HCT116 (cell line): ENCODE measurements at regions of chr9 and their contacts with region 1.

Region 1: DNA sequence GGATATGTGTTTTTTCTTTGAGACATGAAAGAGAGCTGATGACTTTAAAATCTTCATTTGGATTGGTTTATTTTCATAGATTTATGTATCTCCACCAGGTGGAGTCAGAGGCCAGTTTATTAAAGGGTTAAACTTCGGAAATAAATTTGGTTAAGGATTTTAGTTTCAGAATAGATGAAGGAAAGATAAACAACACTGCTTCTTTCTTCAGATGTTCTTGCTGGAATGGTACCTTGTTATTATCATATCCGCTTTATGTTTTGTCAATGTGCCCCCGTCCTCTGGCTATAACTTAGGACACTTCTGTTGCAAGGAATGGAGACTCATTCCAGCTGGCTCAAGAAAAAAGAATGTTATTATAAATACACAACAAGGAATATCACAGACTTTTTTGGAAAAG is 81.2 kb downstream of the ALDH1A1 start:
- DNase-seq: peak; percentile 26
- ATAC-seq: peak; percentile 42
- H3K4me3 ChIP-seq: no peak overlapping the region
- H3K27ac ChIP-seq: no peak overlapping the region
- H3K4me1 ChIP-seq: no peaks in the 10 kb centered on the region
- H3K27me3 ChIP-seq: no peaks in the 10 kb centered on the region
- CTCF ChIP-seq: peak; percentile 31 to 71 (median 69); a peak in 4 of 6 replicates
- POLR2A ChIP-seq: no peak
- RAD21 ChIP-seq: peak; percentile 76

Region 2: GRCh38 chr9:73081979-73082657 is 210.4 kb after region 1 on chr9:
- CTCF ChIA-PET with region 1: interaction called, 44 read pairs
- POLR2A ChIA-PET with region 1: no interaction called
- RAD21 ChIA-PET with region 1: interaction called, 3 to 4 read pairs
- intact Hi-C with region 1: loop called (anchors 2 kb)
- DNase-seq: peak; percentile 41
- ATAC-seq: peak; percentile 68
- H3K4me3 ChIP-seq: no peak overlapping the region
- H3K27ac ChIP-seq: no peak overlapping the region
- H3K4me1 ChIP-seq: peaks cover 5 to 12% of the 10 kb centered on the region in 2 experiments; a peak in 3 of 4 replicates
- H3K27me3 ChIP-seq: no peaks in the 10 kb centered on the region
- CTCF ChIP-seq: peak; percentile 57 to 78 (median 78); a peak in 5 of 6 replicates
- POLR2A ChIP-seq: no peak
- RAD21 ChIP-seq: peak; percentile 73